Sigmoid colon (tissue), 7 donors: ENCODE measurements at regions of chr5 and their contacts with region 1.

Region 1: GRCh38 chr5:132820162-132820754 is 7.2 kb downstream of the SOWAHA start:
- DNase-seq: peak; percentile 94
- H3K4me3 ChIP-seq: no peak overlapping the region
- H3K27ac ChIP-seq: no peak overlapping the region
- H3K4me1 ChIP-seq: peaks cover 0 to 19% (median 11%) of the 10 kb centered on the region in 4 donors
- H3K27me3 ChIP-seq: peaks cover 0 to 17% (median 12%) of the 10 kb centered on the region in 3 donors
- CTCF ChIP-seq: peak; percentile 77 to 93 (median 88)
- EP300 ChIP-seq: no peak
- POLR2A ChIP-seq: no peak

Region 2: DNA sequence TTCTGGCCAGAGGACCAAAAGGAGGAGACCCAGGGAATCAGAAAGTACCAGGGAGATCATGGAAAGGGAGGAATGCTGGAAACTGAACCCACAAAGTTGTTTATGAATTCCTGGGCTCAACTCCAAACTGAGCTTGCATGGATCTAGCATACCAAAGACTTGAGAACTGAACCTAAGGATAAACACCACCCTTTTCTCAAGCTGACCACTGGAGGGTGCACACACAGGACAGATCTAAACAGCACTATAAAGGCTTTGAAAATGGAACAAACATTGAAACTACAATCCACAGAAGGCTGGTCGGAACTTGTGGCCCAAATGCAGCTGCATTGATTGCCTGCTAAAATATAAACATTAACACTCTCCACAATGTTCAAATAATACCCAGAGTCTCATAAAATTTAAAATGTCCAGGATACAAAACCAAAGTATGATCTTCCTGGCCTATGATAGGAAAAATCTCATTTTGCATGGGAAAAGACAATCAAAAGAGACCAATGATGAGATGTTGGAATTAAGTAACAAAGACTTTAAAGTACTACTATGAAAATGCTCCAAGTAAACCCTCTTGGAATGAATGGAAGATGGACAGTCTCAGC is 314.1 kb before region 1 on chr5:
- intact Hi-C with region 1: loop called (anchors 5 kb)
- DNase-seq: no peak
- H3K4me3 ChIP-seq: no peak overlapping the region
- H3K27ac ChIP-seq: peak overlapping the region; percentile 43 to 76 (median 74)
- H3K4me1 ChIP-seq: peaks cover 0 to 25% (median 21%) of the 10 kb centered on the region in 4 donors
- H3K27me3 ChIP-seq: no peaks in the 10 kb centered on the region
- CTCF ChIP-seq: peak; percentile 44 to 50 (median 48)
- EP300 ChIP-seq: no peak
- POLR2A ChIP-seq: no peak

Region 3: GRCh38 chr5:132736853-132737833 is 83.1 kb before region 1 on chr5 and contains the start of gene KIF3A:
- intact Hi-C with region 1: loop called (anchors 10 kb)
- DNase-seq: peak; percentile 98
- H3K4me3 ChIP-seq: peak within 1 kb of the TSS; percentile 77 to 94 (median 81)
- H3K27ac ChIP-seq: peak within 1 kb of the TSS; percentile 74 to 85 (median 80)
- H3K4me1 ChIP-seq: peaks cover 0 to 19% (median 10%) of the 10 kb centered on the region in 4 donors
- H3K27me3 ChIP-seq: no peaks in the 10 kb centered on the region
- CTCF ChIP-seq: peak in 2 of 4 experiments; percentile 14 to 30
- EP300 ChIP-seq: no peak
- POLR2A ChIP-seq: no peak
- total RNA-seq, gene KIF3A: 7.1 to 19.9 (median 12.9) TPM